Uterus (tissue), 4 donors: ENCODE measurements at regions of chr20 and their contacts with region 1.

Region 1: GRCh38 chr20:63864847-63865640 is at the start of gene TPD52L2:
- DNase-seq: peak; percentile 98 to 99
- H3K4me3 ChIP-seq: peak within 1 kb of the TSS; percentile 55 to 81
- H3K27ac ChIP-seq: peak within 1 kb of the TSS; percentile 84 to 87
- H3K4me1 ChIP-seq: peaks cover 0 to 6% of the 10 kb centered on the region in 2 donors
- H3K27me3 ChIP-seq: no peaks in the 10 kb centered on the region
- CTCF ChIP-seq: peak in 1 of 4 experiments; percentile 9
- POLR2A ChIP-seq: peak; percentile 70 to 85
- total RNA-seq, gene TPD52L2: 44.1 to 77.8 (median 62.0) TPM

Region 2: GRCh38 chr20:63782051-63782471 is 83.0 kb before region 1 on chr20:
- intact Hi-C with region 1: loop called (anchors 10 kb)
- DNase-seq: no peak
- H3K4me3 ChIP-seq: no peak overlapping the region
- H3K27ac ChIP-seq: no peak overlapping the region
- H3K4me1 ChIP-seq: no peaks in the 10 kb centered on the region
- H3K27me3 ChIP-seq: no peaks in the 10 kb centered on the region
- CTCF ChIP-seq: no peak
- POLR2A ChIP-seq: no peak